Endothelial cell of umbilical vein (primary cell): ENCODE measurements at regions of chrX and their contacts with region 1.

Region 1: GRCh38 chrX:65677954-65678469 is 10.6 kb downstream of the MSN start:
- DNase-seq: peak; percentile 94
- H3K4me3 ChIP-seq: peak overlapping the region in 1 of 3 experiments; percentile 23
- H3K27ac ChIP-seq: peak overlapping the region; percentile 94
- H3K4me1 ChIP-seq: peaks cover 78% of the 10 kb centered on the region
- H3K27me3 ChIP-seq: no peaks in the 10 kb centered on the region
- CTCF ChIP-seq: no peak
- POLR2A ChIP-seq: peak; percentile 4

Region 2: DNA sequence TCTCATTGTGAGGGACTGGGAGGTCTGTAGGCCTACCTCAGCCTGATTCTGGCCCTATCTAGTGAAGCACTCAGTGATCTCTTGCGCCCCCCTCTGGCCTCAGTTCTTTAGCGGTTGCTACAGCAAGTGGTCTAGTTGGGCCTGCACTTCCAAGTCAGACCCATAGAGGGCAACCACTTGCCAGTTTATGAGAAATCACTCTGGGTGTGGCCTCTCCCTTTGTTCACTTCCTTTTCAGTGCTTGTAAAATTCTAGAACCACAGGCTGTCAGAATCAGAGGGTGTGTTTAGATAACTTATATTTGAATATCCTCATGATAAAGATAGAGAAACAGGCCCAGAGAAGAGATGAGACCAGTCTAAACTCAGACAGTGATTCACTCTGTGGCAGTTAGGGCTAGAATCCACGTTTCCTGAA is 82.5 kb before region 1 on chrX:
- CTCF ChIA-PET with region 1: interaction called, 8 read pairs
- POLR2A ChIA-PET with region 1: no interaction called
- dilution Hi-C with region 1: no loop called
- intact Hi-C with region 1: loop called (anchors 1 kb)
- DNase-seq: peak; percentile 90
- H3K4me3 ChIP-seq: no peak overlapping the region
- H3K27ac ChIP-seq: peak overlapping the region; percentile 92
- H3K4me1 ChIP-seq: peaks cover 28% of the 10 kb centered on the region
- H3K27me3 ChIP-seq: no peaks in the 10 kb centered on the region
- CTCF ChIP-seq: peak; percentile 88 to 98
- POLR2A ChIP-seq: no peak

Region 3: GRCh38 chrX:65601530-65602220 is 76.3 kb before region 1 on chrX:
- CTCF ChIA-PET with region 1: interaction called, 8 read pairs
- POLR2A ChIA-PET with region 1: interaction called, 12 read pairs
- dilution Hi-C with region 1: no loop called
- intact Hi-C with region 1: loop called (anchors 1 kb)
- DNase-seq: peak; percentile 97
- H3K4me3 ChIP-seq: no peak overlapping the region
- H3K27ac ChIP-seq: peak overlapping the region; percentile 96
- H3K4me1 ChIP-seq: peaks cover 44% of the 10 kb centered on the region
- H3K27me3 ChIP-seq: no peaks in the 10 kb centered on the region
- CTCF ChIP-seq: no peak
- POLR2A ChIP-seq: peak; percentile 41

Region 4: DNA sequence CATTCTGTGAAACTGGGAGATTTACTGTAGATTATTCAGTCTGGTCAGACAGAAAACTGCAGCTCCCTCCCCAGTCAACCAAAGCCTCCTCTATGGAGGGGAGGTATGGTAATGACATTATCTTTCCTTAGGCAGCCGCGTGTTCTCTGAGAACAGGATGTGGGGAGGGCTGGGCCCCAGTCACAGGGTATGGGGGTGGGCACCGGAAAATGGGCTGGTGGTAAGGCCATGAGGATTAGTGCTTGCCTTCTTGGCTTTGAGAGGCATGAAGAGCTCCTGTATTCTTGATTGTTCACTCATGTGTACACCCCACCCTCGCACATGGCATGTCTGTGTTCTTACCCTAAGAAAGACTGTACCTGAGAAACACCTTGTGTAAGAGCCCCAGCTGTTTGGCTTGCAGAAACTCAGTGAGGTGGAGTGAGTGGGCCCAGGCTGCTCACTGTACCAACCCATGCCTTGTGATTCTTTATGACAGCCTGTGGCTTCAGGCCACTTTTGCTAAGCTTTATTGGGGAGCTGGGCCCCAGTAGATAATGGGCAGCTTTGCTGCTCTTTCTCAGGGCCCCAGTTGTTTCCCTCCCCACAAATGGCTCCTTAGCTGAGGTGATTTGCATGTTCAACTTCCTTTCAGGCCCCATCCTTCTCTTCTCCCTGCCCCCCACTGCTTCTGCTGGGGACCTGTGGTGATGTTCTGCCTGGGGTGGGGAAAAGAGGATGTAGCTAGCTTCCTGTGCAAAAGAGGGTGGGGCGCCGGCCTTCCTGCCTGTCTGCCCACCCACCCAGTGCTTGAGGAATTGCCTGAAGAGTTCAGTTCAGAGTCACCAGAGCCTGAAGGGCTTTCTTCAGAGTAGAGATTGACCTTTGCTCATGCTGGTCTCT is 20.1 kb after region 1 on chrX:
- CTCF ChIA-PET with region 1: interaction called, 19 read pairs
- POLR2A ChIA-PET with region 1: interaction called, 10 read pairs
- dilution Hi-C with region 1: no loop called
- intact Hi-C with region 1: loop called (anchors 1 kb)
- DNase-seq: peak; percentile 55
- H3K4me3 ChIP-seq: no peak overlapping the region
- H3K27ac ChIP-seq: peak overlapping the region; percentile 84
- H3K4me1 ChIP-seq: peaks cover 65% of the 10 kb centered on the region
- H3K27me3 ChIP-seq: no peaks in the 10 kb centered on the region
- CTCF ChIP-seq: no peak
- POLR2A ChIP-seq: no peak

Region 5: DNA sequence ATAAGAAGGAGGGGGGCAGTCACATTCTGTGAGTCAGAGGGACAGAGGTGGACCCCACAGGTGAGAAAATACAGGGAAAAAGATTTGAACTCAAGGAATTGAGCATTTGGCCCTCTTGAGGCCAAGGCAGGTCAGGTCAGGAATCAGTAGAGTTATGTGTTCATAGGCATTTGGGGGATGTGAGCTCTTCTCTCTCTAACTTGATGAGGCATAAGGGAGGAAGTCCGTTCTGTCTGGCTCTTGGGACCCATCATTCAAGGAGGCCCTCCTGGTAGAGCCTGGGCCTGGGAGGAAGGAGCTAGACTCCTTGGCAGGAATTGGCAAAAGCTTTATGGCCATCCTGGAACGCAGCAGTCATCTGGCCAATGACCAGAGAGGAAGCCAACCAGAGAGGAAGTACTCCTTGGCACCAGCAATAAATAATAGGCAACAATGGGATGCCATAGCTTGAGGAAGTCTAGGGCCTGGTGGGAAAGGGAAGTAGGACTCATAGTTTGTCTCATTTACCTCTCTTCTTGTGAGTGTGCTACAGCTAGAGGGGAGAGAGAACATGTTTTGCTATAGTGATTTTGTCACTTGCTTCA is 42.5 kb after region 1 on chrX:
- CTCF ChIA-PET with region 1: interaction called, 4 read pairs
- POLR2A ChIA-PET with region 1: interaction called, 4 read pairs
- dilution Hi-C with region 1: no loop called
- intact Hi-C with region 1: loop called (anchors 1 kb)
- DNase-seq: peak; percentile 75
- H3K4me3 ChIP-seq: no peak overlapping the region
- H3K27ac ChIP-seq: peak overlapping the region; percentile 89
- H3K4me1 ChIP-seq: peaks cover 50% of the 10 kb centered on the region
- H3K27me3 ChIP-seq: no peaks in the 10 kb centered on the region
- CTCF ChIP-seq: peak; percentile 3 to 6
- POLR2A ChIP-seq: no peak